ENCODE measurements at regions of chr4 and their contacts with region 1.

Region 1: DNA sequence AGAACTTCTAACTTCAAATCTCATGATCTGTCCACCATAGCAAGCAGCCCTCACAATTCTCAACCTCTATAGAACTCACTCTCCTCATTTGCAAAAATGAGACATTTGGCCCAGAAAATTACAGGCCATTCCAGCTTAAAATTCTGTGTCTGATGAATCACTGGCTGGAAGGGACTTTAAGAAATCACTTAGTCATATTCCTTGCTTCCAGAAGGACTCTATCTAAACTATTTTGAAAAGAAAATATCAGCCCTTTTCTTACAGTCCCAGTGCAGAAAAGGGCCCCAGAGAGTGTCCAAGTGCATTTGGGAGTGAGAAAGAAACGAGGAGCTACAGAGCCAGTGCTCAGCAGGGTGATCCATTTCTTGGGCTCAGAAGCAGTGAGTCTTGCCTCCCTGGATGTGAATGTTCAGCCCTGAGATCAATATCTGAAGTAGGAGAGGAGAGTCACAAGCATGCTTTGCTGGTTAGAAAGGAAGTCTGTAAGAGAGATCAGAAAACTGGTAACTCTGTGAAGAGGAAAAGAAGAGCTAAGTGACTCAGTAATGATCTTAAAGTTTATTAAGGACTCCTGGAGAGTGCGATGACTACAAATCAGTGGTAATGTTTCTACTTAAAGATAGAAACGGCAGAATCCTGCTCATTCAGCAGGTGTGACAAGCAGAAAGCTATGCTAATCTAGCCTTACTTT is 139.8 kb downstream of the PALLD start:
- DNase-seq: no peak
- ATAC-seq: peak in 1 of 4 donors; percentile 9
- H3K4me3 ChIP-seq: no peak overlapping the region
- H3K27ac ChIP-seq: peak overlapping the region; percentile 77
- H3K4me1 ChIP-seq: peaks cover 72% of the 10 kb centered on the region
- H3K27me3 ChIP-seq: no peaks in the 10 kb centered on the region
- CTCF ChIP-seq: no peak

Region 2: DNA sequence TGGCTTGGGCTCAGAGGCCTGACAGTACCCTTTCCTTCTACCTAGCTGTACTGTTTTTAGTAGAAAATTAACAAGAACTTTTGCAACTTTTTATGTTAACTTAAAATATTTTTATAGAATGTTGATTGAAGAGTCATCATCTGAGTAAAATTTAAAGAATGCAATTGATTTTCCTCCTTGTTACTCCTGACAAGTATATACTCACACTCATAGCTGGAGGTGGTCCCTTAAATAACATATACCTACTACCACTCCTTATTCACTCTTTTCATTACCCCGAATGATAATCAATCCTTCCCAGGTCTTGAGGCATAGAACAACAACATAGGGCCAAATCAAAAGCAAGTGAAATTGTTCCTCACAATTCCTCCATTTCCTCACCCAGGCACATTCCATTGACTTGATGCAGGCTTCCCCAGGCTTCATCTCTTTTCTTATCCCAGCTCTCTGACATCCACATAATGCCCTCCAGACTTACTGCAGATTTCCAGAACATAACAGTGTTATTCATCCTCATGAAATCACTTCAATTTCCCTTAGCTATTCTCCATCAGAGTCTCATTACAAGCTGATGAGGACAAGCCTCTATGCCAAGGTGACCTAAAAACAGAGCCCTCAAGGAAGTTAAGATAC is 617.5 kb before region 1 on chr4:
- intact Hi-C with region 1: no loop called
- DNase-seq: no peak
- ATAC-seq: no peak
- H3K4me3 ChIP-seq: no peak overlapping the region
- H3K27ac ChIP-seq: no peak overlapping the region
- H3K4me1 ChIP-seq: no peaks in the 10 kb centered on the region
- H3K27me3 ChIP-seq: no peaks in the 10 kb centered on the region
- CTCF ChIP-seq: no peak

Region 3: GRCh38 chr4:168524006-168524405 is 112.6 kb before region 1 on chr4:
- intact Hi-C with region 1: loop called in 1 of 2 experiments (anchors 5 kb)
- DNase-seq: no peak
- ATAC-seq: peak in 1 of 4 donors; percentile 43
- H3K4me3 ChIP-seq: no peak overlapping the region
- H3K27ac ChIP-seq: peak overlapping the region; percentile 18
- H3K4me1 ChIP-seq: peaks cover 33% of the 10 kb centered on the region
- H3K27me3 ChIP-seq: no peaks in the 10 kb centered on the region
- CTCF ChIP-seq: no peak

Region 4: DNA sequence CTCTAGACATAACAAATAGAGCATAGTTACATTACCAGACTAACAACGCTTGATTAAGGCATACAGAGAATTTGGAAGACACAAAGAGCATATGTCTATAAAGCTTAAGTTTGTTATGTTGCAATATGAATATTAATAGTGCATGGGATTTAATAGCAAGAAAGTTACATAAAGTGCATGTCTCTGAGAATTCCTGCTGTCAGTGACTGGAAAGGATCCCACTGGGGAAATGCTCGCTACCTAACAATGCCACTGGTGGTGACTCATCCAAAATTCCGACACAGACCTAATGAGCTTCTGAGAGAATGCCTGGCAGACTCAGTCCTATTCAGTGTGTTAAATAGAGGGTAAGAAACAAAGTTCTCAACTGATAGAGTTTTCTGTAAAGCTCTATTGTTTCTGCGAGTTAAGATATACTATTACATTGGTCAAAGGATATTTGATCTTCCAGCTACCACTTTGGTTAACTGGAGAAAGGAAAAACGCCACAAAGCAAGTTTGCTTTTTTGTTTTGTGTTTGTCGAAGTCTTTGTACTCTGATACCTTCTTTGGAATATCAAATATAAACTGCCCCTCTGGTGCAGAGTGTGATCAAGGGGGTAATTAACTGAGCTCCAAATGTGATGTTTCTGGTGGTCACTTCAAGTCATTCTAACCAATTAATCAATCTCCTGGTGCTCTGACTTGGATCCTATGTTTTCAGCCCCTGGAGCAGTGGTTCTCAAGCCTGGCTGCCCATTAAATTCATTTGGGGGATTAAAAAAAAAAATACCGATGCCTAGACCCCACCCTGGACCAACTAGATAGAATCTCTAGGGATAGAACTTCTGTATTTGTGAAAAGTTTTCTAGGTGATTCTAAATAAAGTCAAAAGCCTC is 31.9 kb before region 1 on chr4:
- intact Hi-C with region 1: no loop called
- DNase-seq: no peak
- ATAC-seq: peak; percentile 84 to 94 (median 90)
- H3K4me3 ChIP-seq: no peak overlapping the region
- H3K27ac ChIP-seq: peak overlapping the region; percentile 72
- H3K4me1 ChIP-seq: peaks cover 41% of the 10 kb centered on the region
- H3K27me3 ChIP-seq: no peaks in the 10 kb centered on the region
- CTCF ChIP-seq: no peak

Region 5: DNA sequence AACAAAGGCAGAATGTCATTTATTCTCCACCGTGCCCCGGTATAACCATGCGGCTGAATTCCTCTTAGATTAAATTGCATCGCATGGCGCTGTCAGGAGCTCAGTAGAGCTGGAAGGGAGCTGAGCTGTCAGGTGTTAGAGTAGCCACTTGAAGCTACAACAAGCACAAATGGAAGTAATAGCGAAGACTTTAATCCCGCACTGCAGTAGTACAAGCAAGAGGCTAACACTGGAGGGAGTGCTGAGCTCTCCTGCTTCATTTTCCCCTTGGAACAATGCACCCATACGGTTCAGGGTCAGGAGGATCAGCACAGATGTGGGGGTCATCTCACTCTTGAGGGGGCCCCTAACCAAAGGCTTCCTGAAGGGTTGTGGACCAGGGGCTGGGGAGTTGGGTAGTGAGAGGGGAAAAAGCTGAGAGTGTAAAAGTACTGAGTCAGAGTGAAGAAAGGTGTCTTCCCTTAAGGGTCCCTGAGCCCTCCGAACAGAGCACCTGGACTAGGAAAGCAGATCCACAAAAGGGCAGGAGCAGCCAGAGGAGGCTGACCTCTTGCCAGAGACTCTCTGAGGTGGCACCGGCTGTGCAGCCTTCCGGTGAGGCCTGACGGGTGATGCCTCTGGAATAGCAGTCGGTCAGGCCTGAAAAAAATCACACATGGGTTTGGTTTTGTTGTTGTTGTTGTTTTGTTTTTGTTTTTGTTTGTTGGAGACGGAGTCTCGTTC is 409.4 kb after region 1 on chr4:
- intact Hi-C with region 1: no loop called
- DNase-seq: no peak
- ATAC-seq: no peak
- H3K4me3 ChIP-seq: no peak overlapping the region
- H3K27ac ChIP-seq: no peak overlapping the region
- H3K4me1 ChIP-seq: no peaks in the 10 kb centered on the region
- H3K27me3 ChIP-seq: no peaks in the 10 kb centered on the region
- CTCF ChIP-seq: no peak

Measured in psoas muscle (tissue), 8 donors.